ENCODE measurements at regions of chr19 and their contacts with region 1.

Region 1: GRCh38 chr19:1173845-1174809 is at the start of gene SBNO2:
- DNase-seq: peak; percentile 87 to 96 (median 94)
- H3K4me3 ChIP-seq: peak within 1 kb of the TSS; percentile 73
- H3K27ac ChIP-seq: peak within 1 kb of the TSS; percentile 85 to 93
- H3K4me1 ChIP-seq: peaks cover 21% of the 10 kb centered on the region
- H3K27me3 ChIP-seq: no peaks in the 10 kb centered on the region
- CTCF ChIP-seq: no peak
- EP300 ChIP-seq: no peak
- POLR2A ChIP-seq: peak; percentile 69
- total RNA-seq, gene SBNO2: 20.7 to 92.6 (median 62.4) TPM

Region 2: DNA sequence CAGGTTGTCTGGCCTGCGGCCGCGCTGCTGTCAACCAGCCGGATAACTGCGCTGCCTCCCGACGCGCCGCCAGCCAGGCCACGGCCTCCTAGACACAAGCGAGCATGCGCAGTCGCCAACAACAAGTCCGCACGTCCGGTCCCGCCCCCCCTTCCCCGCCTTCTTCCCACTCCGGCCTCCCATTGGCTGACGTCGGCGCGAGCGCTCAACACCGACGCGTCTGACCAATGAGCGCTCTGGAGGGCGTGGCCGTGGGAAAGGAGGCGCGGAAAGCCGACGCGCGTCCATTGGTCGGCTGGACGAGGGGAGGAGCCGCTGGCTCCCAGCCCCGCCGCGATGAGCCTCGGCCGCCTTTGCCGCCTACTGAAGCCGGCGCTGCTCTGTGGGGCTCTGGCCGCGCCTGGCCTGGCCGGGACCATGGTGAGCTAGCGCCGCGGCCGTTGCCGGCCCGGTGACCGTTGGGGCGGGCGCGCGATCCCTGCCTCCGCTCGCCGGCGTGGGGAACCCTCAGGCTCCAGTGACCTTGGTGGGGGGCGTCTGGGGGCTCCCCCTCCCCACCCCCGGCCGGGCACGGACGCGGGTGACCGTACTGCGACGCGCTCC is 70.3 kb before region 1 on chr19 and contains the start of gene GPX4:
- intact Hi-C with region 1: loop called in 1 of 4 experiments (anchors 5 kb)
- DNase-seq: peak; percentile 99
- H3K4me3 ChIP-seq: peak within 1 kb of the TSS; percentile 84
- H3K27ac ChIP-seq: peak within 1 kb of the TSS; percentile 91 to 97
- H3K4me1 ChIP-seq: peaks cover 27% of the 10 kb centered on the region
- H3K27me3 ChIP-seq: no peaks in the 10 kb centered on the region
- CTCF ChIP-seq: no peak
- EP300 ChIP-seq: no peak
- POLR2A ChIP-seq: peak; percentile 78
- total RNA-seq, gene GPX4: 189 to 309 (median 247) TPM

Region 3: GRCh38 chr19:1131738-1132551 is 42.2 kb before region 1 on chr19:
- intact Hi-C with region 1: loop called in 1 of 4 experiments (anchors 5 kb)
- DNase-seq: peak; percentile 76 to 84 (median 79)
- H3K4me3 ChIP-seq: peak overlapping the region; percentile 67
- H3K27ac ChIP-seq: peak overlapping the region; percentile 79 to 83
- H3K4me1 ChIP-seq: peaks cover 22% of the 10 kb centered on the region
- H3K27me3 ChIP-seq: no peaks in the 10 kb centered on the region
- CTCF ChIP-seq: peak in 2 of 3 donors; percentile 33 to 42
- EP300 ChIP-seq: peak; percentile 95
- POLR2A ChIP-seq: peak; percentile 14

Region 4: GRCh38 chr19:1154731-1155351 is 19.3 kb before region 1 on chr19:
- intact Hi-C with region 1: no loop called
- DNase-seq: peak; percentile 82 to 93 (median 83)
- H3K4me3 ChIP-seq: peak overlapping the region; percentile 31
- H3K27ac ChIP-seq: peak overlapping the region; percentile 80 to 86
- H3K4me1 ChIP-seq: peaks cover 22% of the 10 kb centered on the region
- H3K27me3 ChIP-seq: no peaks in the 10 kb centered on the region
- CTCF ChIP-seq: peak in 2 of 3 donors; percentile 6 to 27
- EP300 ChIP-seq: peak; percentile 99
- POLR2A ChIP-seq: peak; percentile 59

Region 5: DNA sequence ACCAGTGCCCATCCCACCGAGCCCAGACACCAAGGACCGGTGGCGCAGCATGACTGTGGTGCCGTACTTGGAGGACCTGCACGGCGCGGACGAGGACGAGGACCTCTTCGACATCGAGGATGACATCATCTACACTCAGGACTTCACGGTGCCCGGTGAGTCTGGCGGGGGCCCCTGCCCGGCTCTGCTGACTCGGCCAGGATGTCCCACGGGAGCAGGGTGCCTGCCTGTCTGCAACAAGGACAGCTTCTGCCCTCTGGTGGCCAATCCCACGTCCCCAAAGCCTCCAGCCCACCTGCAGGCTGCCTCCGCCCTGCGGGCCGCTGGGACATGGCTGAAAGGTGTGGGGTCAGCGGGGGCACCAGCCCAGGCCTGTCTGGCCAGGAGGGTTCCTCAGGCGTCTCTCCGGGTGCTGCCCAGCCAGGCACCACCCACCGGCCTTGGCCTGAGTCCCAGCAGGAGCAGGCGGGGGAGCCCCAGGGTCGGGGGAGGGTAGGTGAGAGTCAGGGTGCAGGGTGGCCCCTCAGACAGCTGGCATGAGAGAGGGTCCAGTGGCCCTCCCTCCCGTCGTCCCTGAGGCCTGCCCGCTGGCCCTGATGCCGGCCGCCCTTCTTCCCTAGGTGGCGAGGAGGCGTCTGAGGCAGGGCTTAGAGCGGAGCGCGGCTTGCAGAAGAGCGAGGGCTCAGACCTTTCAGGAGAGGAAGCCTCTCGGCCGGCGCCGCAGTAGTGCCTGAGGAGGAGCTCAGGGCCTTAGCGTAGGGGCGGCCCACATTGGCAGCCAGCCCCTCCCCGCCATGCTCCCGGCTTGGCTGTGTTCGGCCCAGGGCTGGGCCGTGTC is 49.1 kb after region 1 on chr19:
- intact Hi-C with region 1: no loop called
- DNase-seq: no peak
- H3K4me3 ChIP-seq: no peak overlapping the region
- H3K27ac ChIP-seq: no peak overlapping the region
- H3K4me1 ChIP-seq: peaks cover 3% of the 10 kb centered on the region
- H3K27me3 ChIP-seq: no peaks in the 10 kb centered on the region
- CTCF ChIP-seq: no peak
- EP300 ChIP-seq: no peak
- POLR2A ChIP-seq: no peak

Region 6: GRCh38 chr19:1260636-1261537 is 86.8 kb after region 1 on chr19:
- intact Hi-C with region 1: no loop called
- DNase-seq: peak; percentile 97 to 99 (median 98)
- H3K4me3 ChIP-seq: peak overlapping the region; percentile 52
- H3K27ac ChIP-seq: peak overlapping the region; percentile 89 to 91
- H3K4me1 ChIP-seq: peaks cover 37% of the 10 kb centered on the region
- H3K27me3 ChIP-seq: no peaks in the 10 kb centered on the region
- CTCF ChIP-seq: peak in 1 of 3 donors; percentile 5
- EP300 ChIP-seq: peak; percentile 72
- POLR2A ChIP-seq: peak; percentile 51

Region 7: GRCh38 chr19:1275260-1275975 is 101.3 kb after region 1 on chr19 and contains the start of gene FAM174C:
- intact Hi-C with region 1: no loop called
- DNase-seq: peak; percentile 93 to 97 (median 95)
- H3K4me3 ChIP-seq: peak within 1 kb of the TSS; percentile 55
- H3K27ac ChIP-seq: peak within 1 kb of the TSS; percentile 97 to 99
- H3K4me1 ChIP-seq: peaks cover 28% of the 10 kb centered on the region
- H3K27me3 ChIP-seq: no peaks in the 10 kb centered on the region
- CTCF ChIP-seq: no peak
- EP300 ChIP-seq: no peak
- POLR2A ChIP-seq: peak; percentile 59
- total RNA-seq, gene FAM174C: 21.7 to 72.5 (median 26.7) TPM

Region 8: GRCh38 chr19:2282062-2282861 is 1108.1 kb after region 1 on chr19 and contains the start of gene PEAK3:
- intact Hi-C with region 1: loop called in 1 of 4 experiments (anchors 5 kb)
- DNase-seq: peak in 3 of 5 donors; percentile 53 to 73 (median 56)
- H3K4me3 ChIP-seq: peak within 1 kb of the TSS; percentile 24
- H3K27ac ChIP-seq: no peak within 1 kb of the TSS
- H3K4me1 ChIP-seq: peaks cover 6% of the 10 kb centered on the region
- H3K27me3 ChIP-seq: no peaks in the 10 kb centered on the region
- CTCF ChIP-seq: no peak
- EP300 ChIP-seq: no peak
- POLR2A ChIP-seq: no peak
- total RNA-seq, gene PEAK3: 0.11 to 0.62 (median 0.35) TPM in 5 of 7 donors, not detected in the others

Measured in ovary (tissue), 10 donors.